ENCODE measurements at regions of chr19 and their contacts with region 1.

Region 1: GRCh38 chr19:4723367-4724187 is at the start of gene DPP9:
- DNase-seq: peak; percentile 97
- H3K4me3 ChIP-seq: peak within 1 kb of the TSS; percentile 71 to 88
- H3K27ac ChIP-seq: peak within 1 kb of the TSS; percentile 74 to 86
- H3K4me1 ChIP-seq: peaks cover 6% of the 10 kb centered on the region
- H3K27me3 ChIP-seq: no peaks in the 10 kb centered on the region
- CTCF ChIP-seq: peak; percentile 27 to 84 (median 48)
- POLR2A ChIP-seq: peak; percentile 61
- total RNA-seq, gene DPP9: 53.5 to 116 TPM

Region 2: GRCh38 chr19:4246767-4247593 is 476.6 kb before region 1 on chr19 and contains the start of gene YJU2:
- intact Hi-C with region 1: loop called (anchors 5 kb)
- DNase-seq: peak; percentile 98
- H3K4me3 ChIP-seq: peak within 1 kb of the TSS; percentile 45 to 68
- H3K27ac ChIP-seq: peak within 1 kb of the TSS; percentile 89 to 97
- H3K4me1 ChIP-seq: peaks cover 4% of the 10 kb centered on the region
- H3K27me3 ChIP-seq: no peaks in the 10 kb centered on the region
- CTCF ChIP-seq: peak in 3 of 4 experiments; percentile 15 to 64 (median 51)
- POLR2A ChIP-seq: no peak
- total RNA-seq, gene YJU2: 30.3 to 45.9 TPM

Region 3: GRCh38 chr19:4449022-4449638 is 274.4 kb before region 1 on chr19:
- intact Hi-C with region 1: no loop called
- DNase-seq: peak; percentile 89
- H3K4me3 ChIP-seq: no peak overlapping the region
- H3K27ac ChIP-seq: peak overlapping the region; percentile 67 to 76
- H3K4me1 ChIP-seq: no peaks in the 10 kb centered on the region
- H3K27me3 ChIP-seq: no peaks in the 10 kb centered on the region
- CTCF ChIP-seq: peak in 1 of 4 experiments; percentile 29
- POLR2A ChIP-seq: no peak

Region 4: GRCh38 chr19:4638828-4639530 is 84.6 kb before region 1 on chr19 and contains the start of gene TNFAIP8L1:
- intact Hi-C with region 1: loop called (anchors 5 kb)
- DNase-seq: peak; percentile 95
- H3K4me3 ChIP-seq: peak within 1 kb of the TSS; percentile 39 to 52
- H3K27ac ChIP-seq: peak within 1 kb of the TSS; percentile 45 to 50
- H3K4me1 ChIP-seq: no peaks in the 10 kb centered on the region
- H3K27me3 ChIP-seq: no peaks in the 10 kb centered on the region
- CTCF ChIP-seq: no peak
- POLR2A ChIP-seq: no peak
- total RNA-seq, gene TNFAIP8L1: 4.0 to 6.2 TPM

Measured in prostate gland (tissue), 2 donors.